Activated CD4-positive, alpha-beta T cell treated with anti-CD3 and anti-CD28 coated beads for 36 hours (primary cell): ENCODE measurements at regions of chr2 and their contacts with region 1.

Region 1: DNA sequence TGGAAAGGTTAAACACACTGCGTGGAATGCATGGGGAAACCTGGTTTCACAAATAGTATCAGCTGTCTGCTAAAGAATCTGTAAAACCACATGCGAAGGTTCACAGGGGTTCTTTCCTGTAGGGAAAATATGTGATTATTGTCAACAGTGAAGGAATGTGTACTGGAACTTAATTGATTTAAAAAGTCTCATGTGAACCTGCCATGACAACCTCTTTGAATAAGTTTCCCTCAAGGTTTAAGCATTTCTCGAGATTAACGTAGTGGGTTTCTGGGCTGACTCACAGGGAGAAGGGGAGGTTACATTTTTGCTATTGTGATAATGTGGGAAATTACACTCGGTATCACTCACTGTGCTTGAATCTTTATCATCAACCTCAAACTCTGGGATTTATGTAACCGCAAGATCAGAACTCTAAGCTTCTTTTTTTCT is 28.2 kb upstream of the IL1R1 start:
- DNase-seq: peak; percentile 52
- ATAC-seq: peak; percentile 87
- H3K4me3 Mint-ChIP-seq: peak overlapping the region; percentile 1
- H3K27ac Mint-ChIP-seq: peak overlapping the region; percentile 55
- H3K4me1 Mint-ChIP-seq: peaks cover 86% of the 10 kb centered on the region
- H3K27me3 Mint-ChIP-seq: peaks cover 14% of the 10 kb centered on the region

Region 2: GRCh38 chr2:101900375-101900774 is 213.9 kb before region 1 on chr2:
- CTCF ChIA-PET with region 1: no interaction called
- POLR2A ChIA-PET with region 1: no interaction called
- intact Hi-C with region 1: loop called in 1 of 2 experiments (anchors 1 kb)
- DNase-seq: peak; percentile 82
- ATAC-seq: peak; percentile 93
- H3K4me3 Mint-ChIP-seq: peak overlapping the region; percentile 24
- H3K27ac Mint-ChIP-seq: peak overlapping the region; percentile 90
- H3K4me1 Mint-ChIP-seq: peaks cover 38% of the 10 kb centered on the region
- H3K27me3 Mint-ChIP-seq: peaks cover 10% of the 10 kb centered on the region

Region 3: GRCh38 chr2:102147935-102148334 is 33.6 kb after region 1 on chr2:
- CTCF ChIA-PET with region 1: no interaction called
- POLR2A ChIA-PET with region 1: no interaction called
- intact Hi-C with region 1: loop called in 1 of 2 experiments (anchors 1 kb)
- DNase-seq: peak; percentile 81
- ATAC-seq: peak; percentile 87
- H3K4me3 Mint-ChIP-seq: no peak overlapping the region
- H3K27ac Mint-ChIP-seq: peak overlapping the region; percentile 89
- H3K4me1 Mint-ChIP-seq: peaks cover 26% of the 10 kb centered on the region
- H3K27me3 Mint-ChIP-seq: peaks cover 7% of the 10 kb centered on the region